Natural killer cell (primary cell): ENCODE measurements at regions of chr12 and their contacts with region 1.

Region 1: DNA sequence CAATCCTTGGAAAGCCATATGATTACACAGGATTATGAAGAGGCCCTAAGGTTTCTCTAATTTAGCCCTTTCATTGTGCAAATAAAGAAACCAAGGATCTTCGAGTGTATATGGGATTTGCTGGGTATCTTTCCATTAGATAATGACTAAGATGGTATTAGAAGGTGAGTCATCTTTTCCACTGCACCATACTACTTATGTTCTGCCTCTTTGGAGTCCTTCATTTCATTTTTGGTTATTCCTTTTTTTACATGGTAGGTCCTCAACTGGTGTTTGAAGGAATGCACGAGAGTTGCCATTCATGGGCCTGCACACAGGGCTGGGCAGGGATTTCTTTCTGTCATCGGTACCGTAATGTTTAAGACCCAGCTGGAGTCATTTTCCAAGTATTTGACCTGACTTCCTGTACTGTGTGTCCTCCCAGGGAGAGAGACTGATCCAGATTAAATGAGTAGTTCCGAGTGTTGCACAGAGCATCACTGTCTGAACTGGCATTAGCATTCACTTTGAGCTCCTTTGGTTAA is 85.7 kb downstream of the BORCS5 start:
- DNase-seq: peak in 1 of 2 donors; percentile 55
- ATAC-seq: peak in 1 of 3 donors; percentile 13
- H3K4me3 ChIP-seq: no peak overlapping the region
- H3K4me3 Mint-ChIP-seq: peak overlapping the region; percentile 65
- H3K27ac ChIP-seq: peak overlapping the region; percentile 78
- H3K27ac Mint-ChIP-seq: peak overlapping the region; percentile 94 to 98
- H3K4me1 ChIP-seq: peaks cover 40% of the 10 kb centered on the region
- H3K4me1 Mint-ChIP-seq: peaks cover 49 to 55% of the 10 kb centered on the region in 2 donors
- H3K27me3 ChIP-seq: no peaks in the 10 kb centered on the region
- H3K27me3 Mint-ChIP-seq: no peaks in the 10 kb centered on the region
- CTCF ChIP-seq: no peak

Region 2: DNA sequence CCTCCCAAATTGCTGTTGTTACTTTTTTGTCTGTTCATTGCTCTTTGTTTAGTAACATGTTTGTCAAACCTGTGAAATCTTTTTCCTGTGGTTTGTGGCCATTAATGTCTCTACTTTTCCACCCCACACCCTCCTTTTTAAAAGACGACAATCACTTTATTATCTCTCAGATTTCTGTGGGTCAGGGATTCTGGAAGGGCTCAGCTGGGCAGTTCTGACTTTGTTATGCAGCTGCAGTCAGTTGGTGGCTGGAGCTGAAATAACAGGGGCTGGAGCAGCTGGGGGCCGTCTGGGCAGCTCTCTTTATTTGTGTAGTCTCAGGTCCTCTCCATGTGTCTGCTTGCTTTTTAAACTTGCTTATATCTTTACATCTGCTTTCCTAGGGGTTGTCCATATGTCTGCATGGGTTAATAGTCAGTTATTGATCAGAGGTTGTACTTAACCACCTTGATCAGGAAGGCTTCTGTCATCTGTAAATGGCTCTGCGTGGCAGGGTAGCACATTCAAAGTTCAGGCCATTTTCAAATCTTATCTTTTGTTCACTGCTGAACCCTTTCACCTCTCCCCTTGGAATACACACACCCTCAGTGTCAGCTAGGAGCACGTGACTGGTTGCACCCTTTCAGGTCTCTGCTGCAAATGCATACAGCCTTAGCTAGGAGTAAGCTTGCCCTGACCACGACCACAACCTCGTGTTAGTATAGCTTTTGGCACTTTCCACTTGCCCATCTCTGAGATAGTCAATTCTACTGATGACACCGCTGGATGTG is 57.9 kb before region 1 on chr12:
- intact Hi-C with region 1: loop called (anchors 1 kb)
- DNase-seq: peak; percentile 39 to 66
- ATAC-seq: peak; percentile 64 to 73 (median 69)
- H3K4me3 ChIP-seq: no peak overlapping the region
- H3K4me3 Mint-ChIP-seq: peak overlapping the region; percentile 85
- H3K27ac ChIP-seq: peak overlapping the region; percentile 68
- H3K27ac Mint-ChIP-seq: peak overlapping the region; percentile 91 to 96
- H3K4me1 ChIP-seq: peaks cover 38% of the 10 kb centered on the region
- H3K4me1 Mint-ChIP-seq: peaks cover 55% of the 10 kb centered on the region in 2 donors
- H3K27me3 ChIP-seq: no peaks in the 10 kb centered on the region
- H3K27me3 Mint-ChIP-seq: no peaks in the 10 kb centered on the region
- CTCF ChIP-seq: no peak

Region 3: GRCh38 chr12:12562585-12563261 is 120.1 kb after region 1 on chr12 and contains the start of gene DUSP16:
- intact Hi-C with region 1: loop called (anchors 5 kb)
- DNase-seq: peak; percentile 74 to 93
- ATAC-seq: peak; percentile 74 to 92 (median 84)
- H3K4me3 ChIP-seq: peak within 1 kb of the TSS; percentile 67
- H3K4me3 Mint-ChIP-seq: peak within 1 kb of the TSS; percentile 95
- H3K27ac ChIP-seq: peak within 1 kb of the TSS; percentile 88
- H3K27ac Mint-ChIP-seq: peak within 1 kb of the TSS; percentile 90 to 96
- H3K4me1 ChIP-seq: peaks cover 10% of the 10 kb centered on the region
- H3K4me1 Mint-ChIP-seq: peaks cover 10 to 13% of the 10 kb centered on the region in 2 donors
- H3K27me3 ChIP-seq: no peaks in the 10 kb centered on the region
- H3K27me3 Mint-ChIP-seq: peaks cover 0 to 3% of the 10 kb centered on the region in 2 donors
- CTCF ChIP-seq: no peak
- total RNA-seq, gene DUSP16: 6.9 to 19.9 (median 10.0) TPM

Region 4: GRCh38 chr12:12859690-12860089 is 417.1 kb after region 1 on chr12:
- intact Hi-C with region 1: no loop called
- DNase-seq: no peak
- ATAC-seq: no peak
- H3K4me3 ChIP-seq: no peak overlapping the region
- H3K4me3 Mint-ChIP-seq: no peak overlapping the region
- H3K27ac ChIP-seq: no peak overlapping the region
- H3K27ac Mint-ChIP-seq: no peak overlapping the region
- H3K4me1 ChIP-seq: no peaks in the 10 kb centered on the region
- H3K4me1 Mint-ChIP-seq: no peaks in the 10 kb centered on the region
- H3K27me3 ChIP-seq: no peaks in the 10 kb centered on the region
- H3K27me3 Mint-ChIP-seq: no peaks in the 10 kb centered on the region
- CTCF ChIP-seq: no peak